Activated naive CD4-positive, alpha-beta T cell treated with anti-CD3 and anti-CD28 coated beads for 36 hours (primary cell): ENCODE measurements at regions of chr9 and their contacts with region 1.

Region 1: DNA sequence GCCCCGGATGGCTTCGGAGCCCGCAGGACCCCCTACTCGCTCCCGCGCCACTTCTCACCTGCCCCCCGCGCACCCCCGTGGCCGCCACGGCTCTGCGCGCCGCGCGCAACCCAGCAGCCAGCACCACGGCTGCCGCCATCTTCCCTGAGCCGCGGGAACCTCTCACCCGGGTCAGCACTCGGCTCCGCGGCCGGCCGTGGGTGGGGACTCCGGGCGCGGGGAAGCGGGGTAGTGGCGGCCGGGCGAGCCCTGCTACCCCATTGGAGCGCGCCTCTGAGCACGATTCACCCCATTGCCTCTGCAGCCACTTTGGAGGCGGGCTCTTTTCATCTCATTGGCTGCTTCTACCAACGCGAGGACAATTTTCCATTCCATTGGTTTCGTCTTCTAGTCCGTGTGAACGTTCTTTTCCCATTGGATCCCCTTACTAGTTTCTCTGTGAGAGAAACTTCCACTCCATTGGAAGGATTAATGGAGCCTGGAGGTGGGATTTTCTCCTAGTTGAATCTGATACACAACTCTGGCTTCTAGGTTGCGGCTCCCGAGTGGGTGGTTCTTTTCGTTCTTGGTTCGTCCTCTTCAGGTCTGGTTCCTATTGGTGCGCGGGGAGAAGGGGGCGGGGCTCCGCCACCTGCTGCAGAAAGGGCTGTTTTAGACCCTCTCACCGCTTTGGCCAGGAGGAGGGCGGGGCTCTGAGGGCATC is at the start of gene HINT2:
- DNase-seq: peak; percentile 98
- H3K4me3 Mint-ChIP-seq: peak within 1 kb of the TSS; percentile 92
- H3K27ac Mint-ChIP-seq: peak within 1 kb of the TSS; percentile 97
- H3K4me1 Mint-ChIP-seq: peaks cover 28% of the 10 kb centered on the region
- H3K27me3 Mint-ChIP-seq: no peaks in the 10 kb centered on the region
- total RNA-seq, gene HINT2: 61.0 to 68.3 TPM

Region 2: GRCh38 chr9:35111001-35111933 is 703.7 kb before region 1 on chr9:
- CTCF ChIA-PET with region 1: no interaction called
- intact Hi-C with region 1: loop called (anchors 1 kb)
- DNase-seq: peak; percentile 97
- H3K4me3 Mint-ChIP-seq: peak overlapping the region; percentile 56
- H3K27ac Mint-ChIP-seq: peak overlapping the region; percentile 88
- H3K4me1 Mint-ChIP-seq: peaks cover 44% of the 10 kb centered on the region
- H3K27me3 Mint-ChIP-seq: no peaks in the 10 kb centered on the region

Region 3: GRCh38 chr9:35464141-35465025 is 350.6 kb before region 1 on chr9:
- CTCF ChIA-PET with region 1: no interaction called
- intact Hi-C with region 1: no loop called
- DNase-seq: no peak
- H3K4me3 Mint-ChIP-seq: no peak overlapping the region
- H3K27ac Mint-ChIP-seq: no peak overlapping the region
- H3K4me1 Mint-ChIP-seq: no peaks in the 10 kb centered on the region
- H3K27me3 Mint-ChIP-seq: peaks cover 18% of the 10 kb centered on the region

Region 4: GRCh38 chr9:35481347-35481975 is 333.5 kb before region 1 on chr9:
- CTCF ChIA-PET with region 1: no interaction called
- intact Hi-C with region 1: no loop called
- DNase-seq: peak; percentile 57
- H3K4me3 Mint-ChIP-seq: no peak overlapping the region
- H3K27ac Mint-ChIP-seq: no peak overlapping the region
- H3K4me1 Mint-ChIP-seq: no peaks in the 10 kb centered on the region
- H3K27me3 Mint-ChIP-seq: peaks cover 6% of the 10 kb centered on the region

Region 5: DNA sequence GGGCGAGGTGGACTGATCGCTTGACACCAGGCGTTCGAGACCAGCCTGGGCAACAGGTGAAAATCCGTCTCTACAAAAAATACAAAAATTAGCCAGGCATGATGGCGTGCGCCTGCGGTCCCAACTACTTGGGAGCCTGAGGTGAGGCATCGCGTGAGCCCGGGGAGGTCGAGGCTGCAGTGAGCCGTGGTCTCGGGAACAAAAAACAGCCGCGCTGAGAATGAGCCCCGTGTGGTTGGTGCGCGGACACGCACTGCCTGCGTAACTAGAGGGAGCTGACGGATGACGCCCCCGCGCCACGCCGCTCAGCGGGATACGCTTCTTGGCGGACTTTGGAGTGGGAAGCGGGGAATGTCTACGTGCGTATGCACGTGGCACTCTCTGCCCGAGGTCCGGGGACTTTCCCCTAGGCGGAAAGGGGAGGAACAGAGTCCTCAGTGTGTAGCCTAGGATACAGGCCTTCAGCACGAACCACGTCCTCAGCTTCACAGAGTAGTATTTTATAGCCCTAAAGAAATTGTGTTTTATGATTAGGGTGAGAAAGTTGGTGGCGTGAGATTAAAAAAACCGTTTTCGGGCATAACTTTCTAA is 157.4 kb before region 1 on chr9 and contains the start of gene RMRP:
- CTCF ChIA-PET with region 1: no interaction called
- intact Hi-C with region 1: loop called (anchors 1 kb)
- DNase-seq: peak; percentile 93
- H3K4me3 Mint-ChIP-seq: peak within 1 kb of the TSS; percentile 84
- H3K27ac Mint-ChIP-seq: peak within 1 kb of the TSS; percentile 94
- H3K4me1 Mint-ChIP-seq: peaks cover 60% of the 10 kb centered on the region
- H3K27me3 Mint-ChIP-seq: peaks cover 3% of the 10 kb centered on the region
- total RNA-seq, gene RMRP: 7,381 to 12,571 TPM

Region 6: DNA sequence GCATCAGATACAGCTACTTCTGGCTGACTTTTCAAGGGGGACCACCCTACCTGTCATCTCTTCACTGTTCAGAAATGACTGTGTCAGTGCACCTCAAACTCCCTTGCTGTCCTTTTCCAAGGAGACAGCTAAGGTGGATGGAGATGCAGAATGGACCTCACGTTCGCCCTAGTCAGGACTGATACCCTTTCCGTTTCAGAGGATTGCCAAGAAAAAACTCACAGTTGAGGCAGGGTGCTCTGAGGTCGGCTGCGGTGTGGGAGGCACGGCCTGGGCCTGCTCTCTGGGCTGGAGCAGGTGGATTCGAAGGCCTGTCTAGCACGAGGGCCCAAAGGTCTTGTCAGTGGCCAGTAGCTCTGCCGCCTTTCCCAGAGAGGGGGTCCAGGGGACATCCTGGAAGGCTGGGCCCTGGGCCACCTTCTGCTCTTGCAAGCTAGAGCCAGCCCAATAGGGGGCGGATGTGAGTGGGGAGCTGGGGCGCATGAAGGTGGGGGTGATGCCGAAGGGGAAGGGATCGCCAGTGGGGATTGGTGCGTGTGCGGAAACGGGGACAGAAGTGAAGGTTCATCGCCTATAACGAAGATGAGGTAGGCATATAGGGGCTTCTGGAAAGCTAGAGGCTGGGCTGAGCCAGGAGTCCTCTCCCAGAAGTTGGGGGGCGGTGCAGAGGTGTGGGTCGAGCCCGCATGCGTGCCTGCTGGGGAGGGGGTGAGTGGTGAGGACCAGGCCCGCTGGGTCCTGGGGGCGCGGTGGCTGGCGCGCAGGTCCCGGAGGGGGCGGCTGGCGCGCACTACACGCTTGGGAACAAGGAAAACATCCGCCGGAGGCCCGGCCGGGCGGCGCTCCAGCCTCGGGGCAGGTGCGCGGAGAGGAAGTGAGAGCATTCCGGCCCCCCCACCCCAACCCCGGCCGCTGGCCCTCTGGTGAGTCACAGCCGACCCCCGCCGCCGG is 58.4 kb before region 1 on chr9:
- CTCF ChIA-PET with region 1: interaction called, 3 read pairs
- intact Hi-C with region 1: loop called (anchors 2 kb)
- DNase-seq: peak; percentile 92
- H3K4me3 Mint-ChIP-seq: peak overlapping the region; percentile 94
- H3K27ac Mint-ChIP-seq: peak overlapping the region; percentile 95
- H3K4me1 Mint-ChIP-seq: peaks cover 33% of the 10 kb centered on the region
- H3K27me3 Mint-ChIP-seq: no peaks in the 10 kb centered on the region

Region 7: GRCh38 chr9:35829084-35829763 is 14.2 kb after region 1 on chr9 and contains the start of gene TMEM8B:
- CTCF ChIA-PET with region 1: interaction called, 13 read pairs
- intact Hi-C with region 1: loop called (anchors 1 kb)
- DNase-seq: peak; percentile 96
- H3K4me3 Mint-ChIP-seq: peak within 1 kb of the TSS; percentile 89
- H3K27ac Mint-ChIP-seq: peak within 1 kb of the TSS; percentile 59
- H3K4me1 Mint-ChIP-seq: peaks cover 24% of the 10 kb centered on the region
- H3K27me3 Mint-ChIP-seq: peaks cover 2% of the 10 kb centered on the region
- total RNA-seq, gene TMEM8B: 6.2 to 6.6 TPM

Region 8: GRCh38 chr9:36258208-36258988 is 443.4 kb after region 1 on chr9 and contains the start of gene GNE:
- CTCF ChIA-PET with region 1: no interaction called
- intact Hi-C with region 1: loop called (anchors 5 kb)
- DNase-seq: peak; percentile 97
- H3K4me3 Mint-ChIP-seq: peak within 1 kb of the TSS; percentile 93
- H3K27ac Mint-ChIP-seq: peak within 1 kb of the TSS; percentile 81
- H3K4me1 Mint-ChIP-seq: peaks cover 14% of the 10 kb centered on the region
- H3K27me3 Mint-ChIP-seq: no peaks in the 10 kb centered on the region
- total RNA-seq, gene GNE: 14.5 to 15.2 TPM